H1 (cell line): ENCODE measurements at regions of chr1 and their contacts with region 1.

Region 1: DNA sequence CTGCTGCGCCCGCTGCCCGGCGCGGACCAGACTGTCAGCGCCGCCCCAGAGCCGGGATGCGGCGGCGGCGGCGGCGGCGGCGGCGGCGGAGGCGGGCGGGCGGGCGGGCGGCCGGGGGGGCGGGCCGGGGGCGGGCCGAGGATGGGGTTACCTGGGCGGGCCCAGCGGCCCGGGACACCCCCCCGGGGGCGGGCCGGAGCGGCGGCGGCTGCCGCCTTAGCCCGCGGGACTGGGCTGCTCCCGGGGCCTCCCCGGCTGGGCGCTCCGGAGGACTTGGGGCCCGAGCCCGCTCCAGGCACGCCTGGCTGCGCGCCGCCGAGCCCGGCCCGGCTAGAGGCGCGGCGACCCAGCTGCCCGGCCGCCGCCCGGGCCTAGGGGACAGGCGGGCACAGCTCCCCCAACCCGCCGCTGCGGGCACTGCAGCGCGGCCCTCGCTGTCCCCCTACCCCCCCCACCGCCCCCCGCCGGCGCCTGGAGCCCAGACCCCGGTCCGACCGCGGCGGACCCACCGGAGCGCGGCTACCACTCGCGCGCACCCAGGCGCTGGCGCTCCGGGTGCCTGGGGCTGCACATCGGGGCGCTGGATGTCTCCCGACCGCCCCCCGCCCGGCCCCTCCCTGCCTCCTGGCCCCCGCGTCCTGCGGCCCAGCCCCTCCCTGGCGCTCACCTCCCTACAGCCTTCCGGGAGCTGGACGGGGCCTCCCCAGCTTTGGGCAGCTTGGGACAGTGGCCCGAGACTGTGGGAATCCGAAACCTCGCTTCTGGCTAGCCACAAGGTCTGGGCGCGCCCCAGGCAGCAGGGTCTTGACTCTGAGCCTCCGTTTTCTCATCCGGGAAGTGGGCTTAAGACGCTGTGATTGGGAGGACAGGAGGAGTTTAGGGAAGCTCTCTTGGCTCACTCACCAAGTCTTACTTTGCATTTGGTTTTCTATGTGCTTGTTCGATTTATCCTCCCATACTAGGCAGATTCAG is at the start of gene WNT4:
- DNase-seq: peak in 1 of 2 experiments; percentile 74
- H3K4me3 ChIP-seq: peak within 1 kb of the TSS; percentile 46 to 73 (median 52)
- H3K27ac ChIP-seq: no peak within 1 kb of the TSS
- H3K4me1 ChIP-seq: peaks cover 5 to 23% (median 10%) of the 10 kb centered on the region in 4 experiments
- H3K27me3 ChIP-seq: peaks cover 4 to 40% (median 26%) of the 10 kb centered on the region in 4 experiments
- CTCF ChIP-seq: peak in 2 of 3 experiments; percentile 19 to 50; a peak in 3 of 4 replicates
- EP300 ChIP-seq: no peak
- POLR2A ChIP-seq: no peak
- RAD21 ChIP-seq: peak in 1 of 2 experiments; percentile 46; a peak in 2 of 4 replicates
- total RNA-seq, gene WNT4: 1.3 and 1.4 TPM in 2 replicates

Region 2: DNA sequence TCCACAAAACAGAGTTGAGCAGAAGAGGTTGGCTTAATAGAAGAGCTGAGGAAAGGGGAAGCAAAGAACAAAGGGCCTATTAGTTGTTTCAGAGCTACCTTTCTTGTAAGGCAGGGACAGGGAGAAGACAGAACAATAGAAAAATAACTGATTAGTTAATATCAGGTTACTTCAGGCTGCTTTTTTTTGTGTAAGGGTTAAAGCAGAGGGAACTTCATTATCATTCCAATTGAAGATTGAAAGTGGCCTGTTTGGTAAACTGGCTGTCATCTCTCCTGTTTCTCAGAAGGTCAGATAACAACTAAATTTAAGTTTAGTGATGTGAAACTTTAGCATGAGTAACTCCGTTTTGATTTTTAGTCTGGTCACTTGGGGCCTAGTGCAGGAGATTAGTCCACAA is 68.5 kb before region 1 on chr1:
- CTCF ChIA-PET with region 1: no interaction called
- POLR2A ChIA-PET with region 1: no interaction called
- DNase-seq: no peak
- H3K4me3 ChIP-seq: no peak overlapping the region
- H3K27ac ChIP-seq: no peak overlapping the region
- H3K4me1 ChIP-seq: peaks cover 0 to 8% (median 1%) of the 10 kb centered on the region in 4 experiments; a peak in 5 of 7 replicates
- H3K27me3 ChIP-seq: no peaks in the 10 kb centered on the region
- CTCF ChIP-seq: no peak
- EP300 ChIP-seq: no peak
- POLR2A ChIP-seq: no peak
- RAD21 ChIP-seq: no peak

Region 3: GRCh38 chr1:22153660-22154437 is 10.5 kb after region 1 on chr1:
- CTCF ChIA-PET with region 1: interaction called, 15 read pairs
- POLR2A ChIA-PET with region 1: no interaction called
- DNase-seq: no peak
- H3K4me3 ChIP-seq: no peak overlapping the region
- H3K27ac ChIP-seq: no peak overlapping the region
- H3K4me1 ChIP-seq: no peaks in the 10 kb centered on the region
- H3K27me3 ChIP-seq: no peaks in the 10 kb centered on the region; a peak in 1 of 7 replicates
- CTCF ChIP-seq: no peak
- EP300 ChIP-seq: no peak
- POLR2A ChIP-seq: no peak
- RAD21 ChIP-seq: no peak